ENCODE measurements at regions of chr22 and their contacts with region 1.

Region 1: DNA sequence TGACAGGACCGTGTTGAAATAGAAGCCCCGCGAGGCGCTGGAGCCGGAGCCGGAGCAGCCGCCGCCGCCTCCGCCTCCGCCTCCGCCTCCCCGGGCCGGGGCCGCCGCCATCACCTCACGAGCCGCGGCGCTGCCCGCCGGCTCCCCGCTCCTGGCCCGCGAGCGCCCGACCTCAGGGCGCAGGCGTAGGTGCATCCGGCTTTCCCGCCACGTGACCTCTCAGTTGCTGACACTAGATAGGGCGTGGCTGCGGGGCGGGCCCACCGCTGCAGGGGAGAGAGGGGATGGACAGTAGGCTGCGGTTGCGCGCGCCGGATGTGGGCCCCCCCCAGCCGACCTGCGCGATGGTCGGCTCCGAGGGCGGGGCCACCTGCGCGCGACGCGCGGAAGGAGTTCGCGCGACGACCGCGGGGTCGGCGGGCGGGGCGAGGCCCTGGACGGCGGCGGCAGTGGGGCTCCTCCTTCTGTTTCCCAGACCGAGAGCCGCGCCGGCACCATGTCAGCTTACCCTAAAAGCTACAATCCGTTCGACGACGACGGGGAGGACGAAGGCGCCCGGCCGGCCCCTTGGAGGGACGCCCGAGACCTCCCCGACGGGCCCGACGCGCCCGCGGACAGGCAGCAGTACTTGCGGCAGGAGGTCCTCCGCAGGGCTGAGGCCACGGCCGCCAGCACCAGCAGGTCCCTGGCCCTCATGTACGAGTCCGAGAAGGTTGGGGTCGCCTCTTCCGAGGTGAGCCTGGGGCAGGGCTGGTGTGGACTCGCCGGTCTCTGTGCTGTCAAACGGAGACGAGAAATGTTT is at the starts of genes PI4KA and SNAP29:
- DNase-seq: peak; percentile 99 to 100 (median 99)
- ATAC-seq: peak; percentile 98 to 99 (median 98)
- H3K4me3 ChIP-seq: peak within 1 kb of the TSS; percentile 78 to 98 (median 89)
- H3K27ac ChIP-seq: peak within 1 kb of the TSS; percentile 59 to 95 (median 90)
- H3K4me1 ChIP-seq: peaks cover 0 to 64% (median 32%) of the 10 kb centered on the region in 12 donors
- H3K27me3 ChIP-seq: no peaks in the 10 kb centered on the region
- CTCF ChIP-seq: peak in 2 of 12 donors; percentile 14 to 24
- POLR2A ChIP-seq: peak in 1 of 2 donors; percentile 88
- total RNA-seq, gene PI4KA: 34.6 to 66.4 (median 48.3) TPM
- total RNA-seq, gene SNAP29: 20.4 to 38.7 (median 26.2) TPM

Region 2: GRCh38 chr22:20946080-20946986 is 87.5 kb after region 1 on chr22:
- intact Hi-C with region 1: no loop called
- DNase-seq: peak in 1 of 5 donors; percentile 58
- ATAC-seq: peak; percentile 59 to 89 (median 84)
- H3K4me3 ChIP-seq: no peak overlapping the region
- H3K27ac ChIP-seq: peak overlapping the region in 4 of 12 donors; percentile 12 to 63 (median 24)
- H3K4me1 ChIP-seq: peaks cover 0 to 42% (median 25%) of the 10 kb centered on the region in 12 donors
- H3K27me3 ChIP-seq: no peaks in the 10 kb centered on the region
- CTCF ChIP-seq: no peak
- POLR2A ChIP-seq: no peak

Region 3: GRCh38 chr22:21001560-21002325 is 142.9 kb after region 1 on chr22 and contains the start of gene THAP7:
- intact Hi-C with region 1: loop called in 2 of 10 experiments (anchors 10 kb)
- DNase-seq: peak; percentile 97 to 99 (median 98)
- ATAC-seq: peak; percentile 95 to 97 (median 96)
- H3K4me3 ChIP-seq: peak within 1 kb of the TSS; percentile 61 to 94 (median 78)
- H3K27ac ChIP-seq: peak within 1 kb of the TSS; percentile 91 to 99 (median 98)
- H3K4me1 ChIP-seq: peaks cover 3 to 36% (median 30%) of the 10 kb centered on the region in 12 donors
- H3K27me3 ChIP-seq: no peaks in the 10 kb centered on the region
- CTCF ChIP-seq: no peak
- POLR2A ChIP-seq: peak in 1 of 2 donors; percentile 76
- total RNA-seq, gene THAP7: 15.3 to 39.0 (median 17.5) TPM

Measured in heart left ventricle (tissue), 16 donors.